Sigmoid colon (tissue), 7 donors: ENCODE measurements at regions of chr3 and their contacts with region 1.

Region 1: DNA sequence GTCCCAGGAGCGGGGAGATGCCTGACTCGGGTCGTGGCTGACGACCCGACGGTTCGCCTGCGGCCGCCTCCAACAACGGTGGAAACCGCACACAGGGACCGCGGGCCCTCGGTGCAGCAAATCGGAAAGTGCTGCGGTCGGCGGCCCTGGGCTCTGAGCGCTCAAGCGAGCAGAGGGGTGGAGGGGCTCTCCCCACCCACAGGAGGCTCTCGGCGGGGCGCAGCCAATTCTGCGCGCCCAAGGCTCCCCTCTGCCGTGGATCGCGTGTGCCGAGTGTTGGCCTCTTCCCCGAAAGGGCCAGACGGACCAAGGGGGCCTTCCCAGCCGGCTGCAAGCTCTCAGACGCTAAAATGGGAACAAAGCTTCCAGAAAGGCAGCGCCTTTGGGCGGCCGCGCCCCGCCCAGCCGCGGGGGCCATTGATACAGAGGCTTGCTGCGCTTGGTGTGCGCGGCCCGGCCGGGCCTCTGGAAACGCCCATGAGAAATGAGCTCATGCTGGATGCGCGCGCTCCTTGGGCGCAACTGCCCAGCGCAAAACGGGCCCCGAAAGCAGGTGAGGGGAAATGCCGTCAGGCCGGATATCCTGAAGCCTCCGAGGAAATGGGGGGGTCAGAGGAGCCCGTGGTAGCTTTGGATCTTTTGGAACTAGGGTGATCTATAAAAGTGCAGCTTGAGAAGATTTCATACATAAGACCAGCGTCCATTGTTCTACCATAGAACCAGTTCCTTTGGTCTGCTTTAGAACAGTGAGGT is 1.2 kb upstream of the GSK3B start:
- DNase-seq: peak; percentile 96
- H3K4me3 ChIP-seq: peak overlapping the region; percentile 67 to 96 (median 84)
- H3K27ac ChIP-seq: peak overlapping the region; percentile 99 to 100 (median 100)
- H3K4me1 ChIP-seq: peaks cover 0 to 38% (median 23%) of the 10 kb centered on the region in 4 donors
- H3K27me3 ChIP-seq: no peaks in the 10 kb centered on the region
- CTCF ChIP-seq: no peak
- EP300 ChIP-seq: peak in 1 of 4 donors; percentile 34
- POLR2A ChIP-seq: peak; percentile 92 to 93

Region 2: DNA sequence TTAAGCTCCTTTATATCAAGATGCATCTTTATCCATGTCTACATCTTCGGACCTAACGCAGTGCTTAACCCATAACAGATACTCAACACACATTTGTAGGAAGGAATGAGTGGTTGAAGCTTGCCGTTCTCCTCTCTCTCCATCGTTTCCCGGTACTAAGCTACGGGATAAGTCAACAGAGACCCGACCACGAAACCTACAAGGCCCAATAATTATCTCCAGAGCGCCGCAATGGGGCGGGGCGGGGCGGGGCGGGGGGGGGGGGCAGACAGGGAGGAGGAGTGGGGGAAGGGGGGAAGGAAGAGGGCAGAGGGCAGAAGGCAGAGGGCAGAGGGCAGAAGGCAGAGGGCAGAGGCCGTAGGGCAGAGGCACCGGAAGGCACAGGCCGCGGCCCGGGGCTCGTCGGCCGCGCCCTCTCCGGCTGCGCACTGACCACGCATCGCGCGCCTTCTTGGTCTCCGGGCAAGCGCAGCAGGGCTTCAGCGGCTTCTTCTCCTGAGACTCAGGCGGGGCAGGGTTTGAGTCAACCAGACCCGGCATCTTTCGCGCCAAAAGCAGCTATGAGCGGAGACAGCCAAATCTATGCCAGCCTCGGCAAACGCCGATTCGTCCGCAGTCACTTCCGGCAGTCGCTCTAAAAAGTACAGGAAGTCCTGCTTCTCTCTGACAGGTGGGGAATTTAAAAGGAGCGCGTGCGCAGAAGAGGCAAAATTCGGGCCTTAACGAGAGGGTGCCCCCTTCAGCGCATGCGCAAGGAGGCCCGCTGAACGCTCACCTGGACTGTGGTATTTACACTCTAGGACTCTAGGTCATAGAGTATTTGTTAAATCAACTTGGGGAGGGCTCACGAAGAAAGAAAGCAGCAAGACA is 418.4 kb before region 1 on chr3 and contains the start of gene COX17:
- intact Hi-C with region 1: loop called (anchors 10 kb)
- DNase-seq: peak; percentile 98
- H3K4me3 ChIP-seq: peak within 1 kb of the TSS; percentile 69 to 81 (median 74)
- H3K27ac ChIP-seq: peak within 1 kb of the TSS; percentile 93 to 96 (median 96)
- H3K4me1 ChIP-seq: peaks cover 0 to 19% (median 15%) of the 10 kb centered on the region in 4 donors
- H3K27me3 ChIP-seq: no peaks in the 10 kb centered on the region
- CTCF ChIP-seq: no peak
- EP300 ChIP-seq: no peak
- POLR2A ChIP-seq: peak; percentile 46 to 53
- total RNA-seq, gene COX17: 19.0 to 61.4 (median 42.4) TPM

Region 3: DNA sequence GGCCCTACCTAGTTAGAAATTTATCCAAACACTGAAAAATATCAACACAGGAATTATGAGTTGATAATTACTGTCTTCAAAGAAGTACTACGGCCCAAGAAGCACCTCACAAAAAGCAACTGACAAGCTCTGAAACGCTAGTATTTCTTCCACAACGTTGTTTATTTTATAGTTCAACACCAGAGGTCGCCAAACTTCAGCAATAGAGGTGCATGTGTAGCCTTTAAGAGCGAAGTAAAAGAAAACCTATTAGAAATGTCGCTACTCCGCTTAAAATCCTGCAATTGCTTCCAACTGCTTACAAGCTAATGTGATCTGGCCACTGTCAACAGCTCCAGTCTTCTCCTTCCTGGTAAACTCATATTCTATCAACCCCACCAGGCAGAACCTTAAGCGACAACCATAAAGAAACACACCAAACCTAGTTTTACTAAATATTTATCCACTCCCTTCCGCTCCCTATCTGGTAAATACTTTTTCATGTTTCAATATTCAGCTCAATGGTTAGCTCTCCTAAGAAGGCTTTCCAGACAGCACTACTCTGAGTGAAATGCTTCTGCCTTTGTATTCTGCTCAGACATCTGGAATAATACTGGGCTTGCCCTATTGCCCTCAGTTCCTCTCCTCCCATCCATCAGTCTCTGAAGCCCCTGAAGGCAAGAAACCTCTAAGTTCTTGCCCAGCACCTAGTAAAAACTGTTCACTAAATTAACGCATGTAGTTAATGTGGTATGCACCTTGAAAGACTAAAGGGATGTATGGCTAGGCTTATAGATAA is 203.3 kb before region 1 on chr3:
- intact Hi-C with region 1: loop called (anchors 2 kb)
- DNase-seq: no peak
- H3K4me3 ChIP-seq: peak overlapping the region in 2 of 4 donors; percentile 10 to 18
- H3K27ac ChIP-seq: peak overlapping the region in 3 of 4 donors; percentile 34 to 55 (median 36)
- H3K4me1 ChIP-seq: peaks cover 0 to 11% (median 0%) of the 10 kb centered on the region in 4 donors
- H3K27me3 ChIP-seq: no peaks in the 10 kb centered on the region
- CTCF ChIP-seq: peak; percentile 58 to 69 (median 58)
- EP300 ChIP-seq: no peak
- POLR2A ChIP-seq: no peak

Region 4: DNA sequence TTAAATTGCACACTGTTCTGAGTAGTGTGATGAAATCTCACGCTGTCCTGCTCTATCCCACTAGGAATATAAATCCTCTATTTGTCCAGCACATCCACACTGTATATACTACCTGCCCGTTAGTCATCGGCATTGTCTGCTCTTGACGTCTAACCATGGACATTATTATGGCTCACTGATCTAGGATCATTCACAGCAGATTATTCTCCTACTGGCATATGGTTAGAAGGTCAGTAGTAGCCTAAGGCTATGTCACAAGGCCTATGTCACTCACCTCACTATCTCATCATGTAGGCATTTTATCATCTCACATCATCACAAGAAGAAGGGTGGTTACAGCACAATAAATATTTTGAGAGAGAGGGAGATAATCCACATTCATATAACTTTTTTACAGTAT is 122.1 kb before region 1 on chr3:
- intact Hi-C with region 1: no loop called
- DNase-seq: no peak
- H3K4me3 ChIP-seq: no peak overlapping the region
- H3K27ac ChIP-seq: no peak overlapping the region
- H3K4me1 ChIP-seq: peaks cover 0 to 10% (median 6%) of the 10 kb centered on the region in 4 donors
- H3K27me3 ChIP-seq: no peaks in the 10 kb centered on the region
- CTCF ChIP-seq: no peak
- EP300 ChIP-seq: no peak
- POLR2A ChIP-seq: no peak

Region 5: GRCh38 chr3:120137547-120137946 is 42.1 kb after region 1 on chr3:
- intact Hi-C with region 1: no loop called
- DNase-seq: no peak
- H3K4me3 ChIP-seq: no peak overlapping the region
- H3K27ac ChIP-seq: no peak overlapping the region
- H3K4me1 ChIP-seq: no peaks in the 10 kb centered on the region
- H3K27me3 ChIP-seq: no peaks in the 10 kb centered on the region
- CTCF ChIP-seq: no peak
- EP300 ChIP-seq: no peak
- POLR2A ChIP-seq: no peak

Region 6: GRCh38 chr3:120348981-120349818 is 253.8 kb after region 1 on chr3 and contains the start of gene LRRC58:
- intact Hi-C with region 1: loop called (anchors 10 kb)
- DNase-seq: peak; percentile 95
- H3K4me3 ChIP-seq: peak within 1 kb of the TSS; percentile 62 to 92 (median 84)
- H3K27ac ChIP-seq: peak within 1 kb of the TSS; percentile 84 to 96 (median 94)
- H3K4me1 ChIP-seq: peaks cover 0 to 40% (median 30%) of the 10 kb centered on the region in 4 donors
- H3K27me3 ChIP-seq: no peaks in the 10 kb centered on the region
- CTCF ChIP-seq: peak in 2 of 4 experiments; percentile 23 to 29
- EP300 ChIP-seq: peak in 1 of 4 donors; percentile 44
- POLR2A ChIP-seq: peak; percentile 82 to 83
- total RNA-seq, gene LRRC58: 34.5 to 48.5 (median 43.4) TPM

Region 7: GRCh38 chr3:120596116-120596852 is 500.9 kb after region 1 on chr3 and contains the start of gene NDUFB4:
- intact Hi-C with region 1: loop called (anchors 10 kb)
- DNase-seq: peak; percentile 99
- H3K4me3 ChIP-seq: peak within 1 kb of the TSS; percentile 62 to 88 (median 76)
- H3K27ac ChIP-seq: peak within 1 kb of the TSS; percentile 89 to 94 (median 90)
- H3K4me1 ChIP-seq: peaks cover 0 to 46% (median 38%) of the 10 kb centered on the region in 4 donors
- H3K27me3 ChIP-seq: no peaks in the 10 kb centered on the region
- CTCF ChIP-seq: no peak
- EP300 ChIP-seq: peak in 1 of 4 donors; percentile 50
- POLR2A ChIP-seq: peak; percentile 78 to 86
- total RNA-seq, gene NDUFB4: 72.3 to 148 (median 113) TPM